ENCODE measurements at regions of chr7 and their contacts with region 1.

Region 1: DNA sequence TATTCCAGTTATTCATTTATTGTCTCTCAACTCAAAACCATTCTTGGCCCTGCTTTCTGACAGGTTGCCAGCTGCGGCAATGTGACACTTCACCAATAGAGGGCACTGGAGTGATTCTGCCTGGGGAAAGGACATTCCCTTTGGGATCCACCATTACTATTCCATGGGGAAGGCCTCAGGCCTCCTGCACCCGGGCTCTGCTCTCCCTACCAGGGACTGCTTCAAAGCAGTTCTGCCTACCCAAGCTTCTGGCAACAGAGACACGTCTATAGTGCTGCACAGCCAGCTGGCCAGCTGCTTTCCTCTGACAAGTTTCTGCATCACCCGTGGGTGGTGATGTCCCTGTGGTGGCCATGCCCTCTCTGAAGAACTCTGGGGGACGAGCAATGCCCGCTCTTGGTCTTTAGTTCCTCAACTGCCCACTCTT is 163.8 kb downstream of the ELMO1 start:
- DNase-seq: peak; percentile 39 to 95 (median 72)

Region 2: GRCh38 chr7:37216156-37216852 is 68.5 kb before region 1 on chr7:
- intact Hi-C with region 1: no loop called
- DNase-seq: no peak

Region 3: DNA sequence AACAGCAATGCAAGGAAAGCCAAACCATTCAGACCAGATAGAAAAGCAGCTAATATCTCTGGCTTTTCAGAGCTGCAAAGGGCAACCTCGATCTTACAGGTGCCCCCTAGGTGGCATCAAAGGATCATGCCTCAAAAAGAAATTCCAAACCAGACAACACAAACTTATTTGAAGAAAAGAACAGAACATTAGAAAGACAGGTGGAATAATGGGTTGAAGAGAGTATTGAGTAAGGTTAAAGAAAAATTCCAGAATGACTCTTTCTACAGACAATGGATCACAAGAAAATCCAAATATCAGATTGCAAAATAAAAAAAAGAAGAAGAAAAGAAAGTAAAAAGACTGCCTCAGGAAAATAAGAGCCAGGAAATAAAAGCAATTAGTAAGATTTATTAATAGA is 49.9 kb before region 1 on chr7:
- intact Hi-C with region 1: loop called (anchors 10 kb)
- DNase-seq: peak in 1 of 10 donors; percentile 37

Region 4: GRCh38 chr7:37251222-37251621 is 33.6 kb before region 1 on chr7:
- intact Hi-C with region 1: loop called (anchors 2 kb)
- DNase-seq: peak in 2 of 10 donors; percentile 44 to 82

Region 5: DNA sequence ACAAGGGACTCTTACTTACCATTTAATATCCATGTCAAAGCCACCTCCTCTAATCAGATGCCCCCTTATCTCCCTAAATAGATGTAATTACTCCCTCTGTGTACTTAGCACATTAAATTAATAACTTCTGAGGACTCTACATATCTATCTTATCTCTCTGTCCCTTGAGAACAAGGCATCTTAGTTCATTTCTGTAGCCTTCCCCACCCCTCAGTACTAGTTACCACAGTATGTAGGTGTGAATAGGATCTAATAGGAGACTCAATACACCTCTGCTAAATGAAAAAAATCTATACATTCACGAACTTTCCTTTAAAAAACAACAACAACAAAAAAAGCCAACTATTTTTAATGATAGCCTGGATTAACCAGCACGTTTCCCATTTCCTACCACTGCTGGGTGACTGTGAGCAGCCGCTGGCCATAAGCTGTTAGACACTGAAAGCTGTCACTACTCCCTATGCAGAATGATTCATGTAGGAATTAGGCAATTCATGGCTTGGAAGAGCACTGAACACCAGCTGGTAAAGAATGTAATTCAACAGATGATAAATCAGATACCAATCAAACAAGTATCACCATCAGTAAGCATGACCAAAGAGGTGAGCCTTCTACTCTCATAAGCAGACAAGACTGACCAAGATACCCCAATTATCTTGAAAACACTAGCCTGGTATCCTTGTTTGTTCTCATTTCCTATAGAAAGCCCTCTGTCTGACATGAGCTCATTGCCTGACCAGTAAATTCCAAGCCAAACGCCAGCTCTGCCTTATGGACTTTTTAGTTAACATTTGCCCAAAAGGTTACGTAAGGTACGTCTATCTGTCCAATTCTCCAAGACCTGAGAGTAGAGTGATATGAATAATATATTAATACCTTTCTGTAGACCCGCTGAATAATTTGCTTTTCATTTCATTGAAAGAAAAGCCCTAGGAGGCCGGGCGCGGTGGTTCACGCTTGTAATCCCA is 36.0 kb after region 1 on chr7:
- intact Hi-C with region 1: no loop called
- DNase-seq: no peak

Region 6: DNA sequence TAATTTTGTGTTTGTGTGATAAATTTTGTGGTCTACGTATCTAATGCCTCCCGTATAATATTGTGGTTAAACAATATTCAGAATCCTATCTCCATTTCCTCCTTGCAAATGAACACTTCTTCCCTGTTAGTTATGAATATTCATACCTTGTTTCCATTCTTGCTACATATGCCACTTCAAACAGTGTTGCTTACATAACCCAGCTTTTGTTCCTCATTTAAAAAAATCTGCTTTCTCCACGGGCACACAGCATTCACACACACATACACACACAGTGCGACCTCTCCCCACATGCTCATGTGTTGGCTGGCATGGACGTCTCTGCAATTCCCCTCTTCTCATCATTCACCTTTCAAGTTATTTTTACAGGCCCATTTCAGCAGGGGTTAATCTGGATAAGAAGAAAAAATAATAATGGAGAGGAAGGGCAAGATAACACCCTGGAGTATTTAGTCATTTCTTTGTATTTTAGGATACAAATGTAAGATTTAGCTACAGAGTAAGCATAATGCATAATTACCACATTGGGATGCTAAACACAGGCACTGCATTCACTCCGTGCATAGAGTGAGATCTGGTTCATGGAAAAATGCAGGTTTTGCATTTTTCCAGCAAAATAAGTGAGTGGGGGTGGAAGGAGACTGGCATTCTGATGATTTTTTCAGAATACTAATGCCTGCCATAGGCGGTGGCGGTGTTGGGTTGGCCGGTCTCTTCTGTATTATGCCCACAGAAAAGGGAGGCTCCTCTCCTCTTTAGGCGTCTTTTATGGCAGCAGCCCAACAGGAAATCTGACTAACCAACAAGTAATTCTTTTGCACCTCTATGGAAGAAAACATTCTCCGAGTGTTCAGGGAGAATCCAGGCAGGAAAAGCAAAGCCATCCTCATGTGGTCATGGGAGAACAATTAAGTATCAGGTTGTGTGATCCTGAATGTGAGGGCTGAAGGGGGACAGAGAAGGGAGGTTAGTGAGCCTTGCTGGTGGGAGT is 195.5 kb after region 1 on chr7:
- intact Hi-C with region 1: loop called (anchors 5 kb)
- DNase-seq: peak in 2 of 10 donors; percentile 16 to 32

Measured in posterior cingulate gyrus (tissue), 11 donors.